ENCODE measurements at regions of chr16 and their contacts with region 1.

Region 1: GRCh38 chr16:72832621-72833248 is 215.2 kb downstream of the ZFHX3 start:
- DNase-seq: peak; percentile 79 to 93 (median 89)
- H3K4me3 ChIP-seq: no peak overlapping the region
- H3K27ac ChIP-seq: peak overlapping the region in 1 of 5 donors; percentile 47
- H3K4me1 ChIP-seq: peaks cover 10 to 17% of the 10 kb centered on the region in 2 donors
- H3K27me3 ChIP-seq: no peaks in the 10 kb centered on the region
- CTCF ChIP-seq: peak; percentile 92 to 100 (median 96)
- POLR2A ChIP-seq: no peak

Region 2: GRCh38 chr16:72751076-72751475 is 81.7 kb before region 1 on chr16:
- intact Hi-C with region 1: no loop called
- DNase-seq: no peak
- H3K4me3 ChIP-seq: no peak overlapping the region
- H3K27ac ChIP-seq: no peak overlapping the region
- H3K4me1 ChIP-seq: no peaks in the 10 kb centered on the region
- H3K27me3 ChIP-seq: no peaks in the 10 kb centered on the region
- CTCF ChIP-seq: no peak
- POLR2A ChIP-seq: no peak

Region 3: GRCh38 chr16:72877374-72878028 is 44.8 kb after region 1 on chr16:
- intact Hi-C with region 1: no loop called
- DNase-seq: peak in 6 of 7 donors; percentile 61 to 87 (median 80)
- H3K4me3 ChIP-seq: peak overlapping the region in 1 of 4 donors; percentile 0
- H3K27ac ChIP-seq: peak overlapping the region; percentile 84 to 96 (median 93)
- H3K4me1 ChIP-seq: peaks cover 29 to 38% of the 10 kb centered on the region in 2 donors
- H3K27me3 ChIP-seq: no peaks in the 10 kb centered on the region
- CTCF ChIP-seq: no peak
- POLR2A ChIP-seq: peak in 1 of 2 donors; percentile 77

Region 4: DNA sequence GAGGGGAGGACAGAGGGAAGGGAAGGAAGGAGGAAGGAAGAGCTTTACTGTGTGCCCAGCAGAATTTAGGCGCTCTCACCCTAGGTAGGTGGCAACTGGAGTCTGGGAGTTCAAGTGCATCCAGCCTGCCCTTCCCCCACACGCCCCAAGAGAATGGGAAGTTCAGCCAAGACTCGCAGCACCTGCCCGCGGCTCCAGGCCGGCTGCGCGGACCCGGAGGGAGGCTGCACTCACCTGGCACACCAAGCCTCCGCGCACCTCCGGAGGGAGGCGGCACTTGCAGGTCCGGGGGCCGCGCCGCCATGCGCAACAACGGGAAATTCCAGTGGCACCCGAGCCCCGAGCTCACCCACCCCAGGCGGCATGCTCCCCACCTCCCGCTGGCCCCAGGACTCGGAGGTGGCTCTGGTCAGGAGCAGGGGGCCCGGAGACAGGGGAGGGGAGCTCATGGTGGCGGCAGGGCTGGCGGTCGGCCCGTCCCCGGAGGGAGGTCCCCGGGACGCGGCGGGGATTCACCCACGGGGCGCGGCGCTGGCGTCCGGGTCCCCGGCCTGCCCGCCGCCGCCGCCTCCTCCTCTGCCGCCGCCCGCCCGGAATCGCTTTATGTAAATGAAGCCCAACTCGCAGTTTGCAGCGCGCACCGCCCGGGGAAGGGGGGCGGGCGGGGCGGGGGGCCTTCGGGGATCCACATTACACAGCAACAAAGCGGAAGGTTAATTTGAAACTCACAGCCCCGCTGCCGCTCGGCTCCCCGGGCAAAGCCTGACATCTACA is 215.0 kb after region 1 on chr16 and contains the start of gene ZFHX3:
- intact Hi-C with region 1: loop called (anchors 10 kb)
- DNase-seq: peak; percentile 73 to 89 (median 77)
- H3K4me3 ChIP-seq: peak within 1 kb of the TSS; percentile 41 to 89 (median 82)
- H3K27ac ChIP-seq: peak within 1 kb of the TSS; percentile 83 to 97 (median 88)
- H3K4me1 ChIP-seq: peaks cover 48 to 87% of the 10 kb centered on the region in 2 donors
- H3K27me3 ChIP-seq: no peaks in the 10 kb centered on the region
- CTCF ChIP-seq: peak in 1 of 6 experiments; percentile 25
- POLR2A ChIP-seq: peak; percentile 15 to 66
- total RNA-seq, gene ZFHX3: 8.5 to 31.6 (median 20.9) TPM

Region 5: DNA sequence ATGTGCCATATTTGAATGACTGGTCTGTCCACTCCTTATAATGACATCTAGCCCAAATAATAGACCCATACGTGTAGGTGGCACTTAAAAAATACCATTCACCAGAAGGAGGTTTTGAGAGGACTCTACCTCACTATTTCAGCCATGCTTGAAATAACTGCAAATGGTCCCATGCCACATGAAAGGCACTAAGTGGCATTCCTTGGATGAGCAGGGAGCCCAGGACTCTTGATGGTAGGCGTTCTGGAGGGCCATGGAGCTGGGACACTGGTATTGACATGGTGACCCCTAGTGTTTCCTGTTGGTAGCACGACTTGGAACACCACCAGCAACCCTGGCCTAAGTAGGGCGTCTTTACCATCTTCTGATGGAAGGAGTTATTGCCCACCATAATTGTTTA is 363.9 kb after region 1 on chr16:
- intact Hi-C with region 1: loop called in 1 of 2 experiments (anchors 10 kb)
- DNase-seq: peak; percentile 73 to 91 (median 83)
- H3K4me3 ChIP-seq: no peak overlapping the region
- H3K27ac ChIP-seq: no peak overlapping the region
- H3K4me1 ChIP-seq: no peaks in the 10 kb centered on the region
- H3K27me3 ChIP-seq: no peaks in the 10 kb centered on the region
- CTCF ChIP-seq: peak; percentile 52 to 82 (median 68)
- POLR2A ChIP-seq: no peak

Measured in adrenal gland (tissue), 19 donors.